ENCODE measurements at regions of chr18 and their contacts with region 1.

Region 1: DNA sequence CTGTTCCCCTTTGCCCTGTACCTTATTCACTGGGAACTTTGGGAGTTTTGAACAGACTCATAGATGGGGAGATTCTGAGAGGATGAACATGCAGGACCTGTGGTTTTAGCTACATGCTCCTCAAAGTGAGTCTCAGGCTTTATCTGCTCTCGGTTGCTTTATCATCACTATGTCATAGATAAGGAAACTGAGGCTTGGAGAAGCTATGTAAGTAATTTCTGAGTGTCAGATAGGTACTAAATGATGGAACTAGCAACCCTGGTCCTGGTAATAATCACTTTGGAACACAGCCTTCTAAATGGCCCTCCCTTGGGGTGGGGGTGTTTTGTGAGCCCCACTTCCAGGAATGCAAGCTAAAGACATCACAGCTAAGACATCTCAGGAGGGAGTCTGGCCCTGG is 186.2 kb upstream of the MEX3C start:
- DNase-seq: no peak
- ATAC-seq: no peak
- H3K4me3 ChIP-seq: no peak overlapping the region
- H3K4me3 Mint-ChIP-seq: no peak overlapping the region
- H3K27ac ChIP-seq: no peak overlapping the region
- H3K27ac Mint-ChIP-seq: no peak overlapping the region
- H3K4me1 ChIP-seq: no peaks in the 10 kb centered on the region
- H3K4me1 Mint-ChIP-seq: no peaks in the 10 kb centered on the region
- H3K27me3 ChIP-seq: no peaks in the 10 kb centered on the region
- H3K27me3 Mint-ChIP-seq: no peaks in the 10 kb centered on the region
- CTCF ChIP-seq: no peak

Region 2: GRCh38 chr18:51110073-51110803 is 273.5 kb before region 1 on chr18:
- CTCF ChIA-PET with region 1: interaction called, 7 read pairs
- POLR2A ChIA-PET with region 1: no interaction called
- intact Hi-C with region 1: loop called in 1 of 2 experiments (anchors 2 kb)
- DNase-seq: peak; percentile 40 to 81 (median 64)
- ATAC-seq: peak; percentile 72
- H3K4me3 ChIP-seq: no peak overlapping the region
- H3K4me3 Mint-ChIP-seq: no peak overlapping the region
- H3K27ac ChIP-seq: no peak overlapping the region
- H3K27ac Mint-ChIP-seq: no peak overlapping the region
- H3K4me1 ChIP-seq: peaks cover 7% of the 10 kb centered on the region
- H3K4me1 Mint-ChIP-seq: peaks cover 10% of the 10 kb centered on the region
- H3K27me3 ChIP-seq: no peaks in the 10 kb centered on the region
- H3K27me3 Mint-ChIP-seq: no peaks in the 10 kb centered on the region
- CTCF ChIP-seq: peak; percentile 91

Region 3: GRCh38 chr18:51361130-51361860 is 22.4 kb before region 1 on chr18:
- CTCF ChIA-PET with region 1: no interaction called
- POLR2A ChIA-PET with region 1: no interaction called
- intact Hi-C with region 1: no loop called
- DNase-seq: no peak
- ATAC-seq: no peak
- H3K4me3 ChIP-seq: no peak overlapping the region
- H3K4me3 Mint-ChIP-seq: no peak overlapping the region
- H3K27ac ChIP-seq: no peak overlapping the region
- H3K27ac Mint-ChIP-seq: no peak overlapping the region
- H3K4me1 ChIP-seq: no peaks in the 10 kb centered on the region
- H3K4me1 Mint-ChIP-seq: peaks cover 5% of the 10 kb centered on the region
- H3K27me3 ChIP-seq: no peaks in the 10 kb centered on the region
- H3K27me3 Mint-ChIP-seq: peaks cover 10% of the 10 kb centered on the region
- CTCF ChIP-seq: no peak

Region 4: GRCh38 chr18:51398104-51398503 is 14.4 kb after region 1 on chr18:
- CTCF ChIA-PET with region 1: no interaction called
- POLR2A ChIA-PET with region 1: no interaction called
- intact Hi-C with region 1: no loop called
- DNase-seq: no peak
- ATAC-seq: no peak
- H3K4me3 ChIP-seq: no peak overlapping the region
- H3K4me3 Mint-ChIP-seq: no peak overlapping the region
- H3K27ac ChIP-seq: no peak overlapping the region
- H3K27ac Mint-ChIP-seq: no peak overlapping the region
- H3K4me1 ChIP-seq: no peaks in the 10 kb centered on the region
- H3K4me1 Mint-ChIP-seq: no peaks in the 10 kb centered on the region
- H3K27me3 ChIP-seq: no peaks in the 10 kb centered on the region
- H3K27me3 Mint-ChIP-seq: peaks cover 14% of the 10 kb centered on the region
- CTCF ChIP-seq: no peak